Dendritic cell treated with granulocyte-macrophage colony-stimulating factor and Interleukin-4, amounts not matched to agents 40 ng/mL and 50 ng/mL, for 4 days (primary cell): ENCODE measurements at regions of chr1 and their contacts with region 1.

Region 1: GRCh38 chr1:169106095-169106920 is at the start of gene ATP1B1:
- H3K4me3 Mint-ChIP-seq: peak within 1 kb of the TSS; percentile 98
- H3K27ac Mint-ChIP-seq: peak within 1 kb of the TSS; percentile 92
- H3K4me1 Mint-ChIP-seq: peaks cover 38% of the 10 kb centered on the region
- H3K27me3 Mint-ChIP-seq: peaks cover 6% of the 10 kb centered on the region

Region 2: DNA sequence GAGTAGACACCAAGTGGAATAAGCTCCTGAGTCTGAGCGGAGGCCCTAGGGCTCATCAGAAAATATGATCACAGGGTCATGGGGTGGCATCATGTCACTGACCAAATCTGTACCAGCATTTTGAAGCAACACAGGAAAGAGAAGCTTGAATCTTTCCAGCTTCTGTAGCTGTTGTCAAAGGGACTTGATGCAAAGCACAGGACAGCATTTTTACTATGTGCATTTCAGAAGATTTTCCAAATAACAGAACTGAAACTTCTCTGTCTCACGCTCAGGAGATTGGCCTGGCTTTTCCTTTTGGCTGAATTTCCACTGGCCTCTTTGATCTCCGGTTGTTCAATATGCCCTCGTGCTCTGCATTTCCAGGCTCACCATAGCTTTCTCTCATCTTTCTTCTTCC is 127.0 kb before region 1 on chr1:
- intact Hi-C with region 1: loop called (anchors 5 kb)
- H3K4me3 Mint-ChIP-seq: no peak overlapping the region
- H3K27ac Mint-ChIP-seq: peak overlapping the region; percentile 24
- H3K4me1 Mint-ChIP-seq: peaks cover 42% of the 10 kb centered on the region
- H3K27me3 Mint-ChIP-seq: no peaks in the 10 kb centered on the region

Region 3: DNA sequence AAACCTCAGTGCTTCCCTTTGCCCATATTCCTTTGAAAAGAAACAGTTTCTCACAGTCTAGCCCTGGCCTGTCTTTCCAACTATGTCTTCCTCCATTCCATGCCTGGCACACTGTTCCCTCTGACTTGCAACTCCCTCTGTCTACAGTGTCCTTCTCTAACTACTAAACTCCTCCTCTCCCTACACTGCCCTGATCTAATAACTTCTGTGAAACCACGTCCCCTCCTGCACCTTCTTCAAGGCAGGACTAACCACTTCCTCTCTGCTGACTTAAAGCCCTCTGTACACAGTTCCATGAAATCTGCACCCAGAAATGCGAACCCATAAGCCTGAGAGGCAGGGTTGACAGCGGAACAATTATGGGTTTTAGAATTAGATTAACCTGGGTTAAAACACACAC is 62.0 kb before region 1 on chr1:
- intact Hi-C with region 1: loop called (anchors 5 kb)
- H3K4me3 Mint-ChIP-seq: no peak overlapping the region
- H3K27ac Mint-ChIP-seq: peak overlapping the region; percentile 88
- H3K4me1 Mint-ChIP-seq: peaks cover 95% of the 10 kb centered on the region
- H3K27me3 Mint-ChIP-seq: no peaks in the 10 kb centered on the region